ENCODE measurements at regions of chr15 and their contacts with region 1.

Region 1: DNA sequence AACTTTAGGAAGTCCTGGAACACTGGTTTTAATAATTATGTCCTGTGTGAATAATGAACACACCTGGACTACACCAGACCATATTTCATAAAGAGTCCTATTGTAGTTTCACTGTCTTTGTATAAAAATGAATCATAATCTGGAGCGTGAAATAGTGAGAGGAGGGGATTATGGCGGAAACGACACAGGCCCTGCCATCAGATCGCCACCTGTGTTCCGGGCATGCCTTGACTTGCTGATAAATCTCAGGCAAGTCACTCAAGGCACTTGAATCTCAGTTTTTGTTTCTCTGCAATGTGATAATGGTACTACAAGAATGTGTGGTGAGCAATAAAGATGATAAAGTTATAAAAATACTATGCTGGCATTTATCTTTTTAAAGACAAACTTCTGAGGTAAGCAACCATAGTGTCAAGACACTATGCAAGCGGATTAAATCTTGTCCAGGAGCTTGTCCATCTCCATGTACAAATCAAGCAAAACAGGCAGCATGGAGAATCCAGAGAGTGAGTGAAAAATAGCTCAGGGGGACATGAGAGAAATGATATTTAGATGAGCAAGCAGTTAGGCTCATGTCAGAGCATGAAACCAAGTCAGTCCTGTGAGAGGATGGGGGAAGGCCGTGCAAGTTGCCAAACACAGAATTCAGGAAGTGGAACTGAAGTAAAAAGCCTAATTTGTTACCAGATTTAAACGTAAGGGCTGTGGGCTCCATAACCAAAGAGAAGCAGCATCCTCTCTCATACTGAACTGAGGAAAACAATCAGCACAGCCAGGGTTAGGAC is 995.7 kb downstream of the MCTP2 start:
- DNase-seq: no peak
- H3K4me3 ChIP-seq: no peak overlapping the region
- H3K27ac ChIP-seq: peak overlapping the region in 1 of 2 donors; percentile 58
- H3K4me1 ChIP-seq: no peaks in the 10 kb centered on the region
- H3K27me3 ChIP-seq: no peaks in the 10 kb centered on the region
- CTCF ChIP-seq: no peak
- POLR2A ChIP-seq: no peak

Region 2: DNA sequence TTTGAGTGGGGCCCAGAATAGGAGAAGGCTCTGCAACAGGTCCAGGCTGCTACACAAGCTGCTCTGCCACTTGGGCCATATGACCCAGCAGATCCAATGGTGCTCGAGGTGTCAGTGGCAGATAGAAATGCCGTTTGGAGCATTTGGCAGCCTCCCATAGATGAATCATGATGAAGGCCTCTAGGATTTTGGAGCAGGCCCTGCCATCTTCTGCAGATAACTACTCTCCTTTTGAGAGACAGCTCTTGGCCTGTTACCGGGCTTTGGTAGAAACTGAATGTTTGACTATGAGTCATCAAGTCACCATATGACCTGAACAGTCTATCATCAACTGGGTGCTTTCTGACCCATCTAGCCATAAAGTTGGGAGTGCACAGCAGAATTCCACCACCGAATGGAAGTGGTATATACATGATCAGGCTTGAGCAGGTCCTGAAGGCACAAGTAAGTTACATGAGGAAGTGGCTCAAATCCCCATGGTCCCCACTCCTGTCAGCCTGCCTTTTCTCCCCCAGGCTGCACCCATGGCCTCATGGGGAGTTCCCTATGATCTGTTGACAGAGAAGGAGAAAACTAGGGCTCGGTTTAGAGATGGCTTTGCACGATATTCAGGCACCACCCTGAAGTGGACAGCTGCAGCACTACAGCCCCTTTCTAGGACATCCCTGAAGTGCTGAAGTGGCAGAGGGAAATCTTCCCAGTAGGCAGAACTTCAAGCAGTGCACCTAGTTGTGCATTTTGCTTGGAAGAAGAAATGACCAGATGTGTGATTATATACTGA is 24.3 kb before region 1 on chr15:
- intact Hi-C with region 1: loop called (anchors 1 kb)
- DNase-seq: no peak
- H3K4me3 ChIP-seq: no peak overlapping the region
- H3K27ac ChIP-seq: no peak overlapping the region
- H3K4me1 ChIP-seq: no peaks in the 10 kb centered on the region
- H3K27me3 ChIP-seq: no peaks in the 10 kb centered on the region
- CTCF ChIP-seq: no peak
- POLR2A ChIP-seq: no peak

Measured in breast epithelium (tissue), 4 donors.